Activated naive CD4-positive, alpha-beta T cell treated with anti-CD3 and anti-CD28 coated beads for 36 hours (primary cell): ENCODE measurements at regions of chr10 and their contacts with region 1.

Region 1: GRCh38 chr10:100046021-100046486 is 35.6 kb downstream of the CPN1 start:
- DNase-seq: peak; percentile 91
- H3K4me3 Mint-ChIP-seq: no peak overlapping the region
- H3K27ac Mint-ChIP-seq: no peak overlapping the region
- H3K4me1 Mint-ChIP-seq: peaks cover 7% of the 10 kb centered on the region
- H3K27me3 Mint-ChIP-seq: peaks cover 7% of the 10 kb centered on the region

Region 2: GRCh38 chr10:99395750-99396445 is 650.2 kb before region 1 on chr10:
- CTCF ChIA-PET with region 1: no interaction called
- intact Hi-C with region 1: loop called (anchors 5 kb)
- DNase-seq: no peak
- H3K4me3 Mint-ChIP-seq: no peak overlapping the region
- H3K27ac Mint-ChIP-seq: no peak overlapping the region
- H3K4me1 Mint-ChIP-seq: peaks cover 3% of the 10 kb centered on the region
- H3K27me3 Mint-ChIP-seq: no peaks in the 10 kb centered on the region

Region 3: DNA sequence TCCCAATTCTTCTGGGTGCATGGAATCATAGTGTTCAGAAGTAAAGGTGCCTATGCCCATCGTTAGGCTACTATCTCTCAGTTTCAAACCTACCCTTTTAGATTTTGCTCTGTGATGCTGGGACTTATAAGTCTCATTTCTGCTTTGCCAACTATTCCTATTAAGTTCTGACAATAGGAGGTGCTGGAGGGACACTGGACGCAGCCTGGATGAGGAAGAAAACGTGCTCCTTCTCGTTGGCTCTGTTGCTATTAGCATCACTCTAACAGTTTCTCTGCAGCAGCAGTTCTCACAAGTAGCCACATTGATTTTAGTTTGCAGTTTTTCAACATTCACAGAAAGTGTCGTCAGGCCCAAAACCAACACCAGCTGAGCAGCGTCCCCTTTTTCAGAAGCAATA is 191.2 kb before region 1 on chr10:
- CTCF ChIA-PET with region 1: interaction called, 172 read pairs
- intact Hi-C with region 1: no loop called
- DNase-seq: no peak
- H3K4me3 Mint-ChIP-seq: no peak overlapping the region
- H3K27ac Mint-ChIP-seq: no peak overlapping the region
- H3K4me1 Mint-ChIP-seq: no peaks in the 10 kb centered on the region
- H3K27me3 Mint-ChIP-seq: no peaks in the 10 kb centered on the region

Region 4: DNA sequence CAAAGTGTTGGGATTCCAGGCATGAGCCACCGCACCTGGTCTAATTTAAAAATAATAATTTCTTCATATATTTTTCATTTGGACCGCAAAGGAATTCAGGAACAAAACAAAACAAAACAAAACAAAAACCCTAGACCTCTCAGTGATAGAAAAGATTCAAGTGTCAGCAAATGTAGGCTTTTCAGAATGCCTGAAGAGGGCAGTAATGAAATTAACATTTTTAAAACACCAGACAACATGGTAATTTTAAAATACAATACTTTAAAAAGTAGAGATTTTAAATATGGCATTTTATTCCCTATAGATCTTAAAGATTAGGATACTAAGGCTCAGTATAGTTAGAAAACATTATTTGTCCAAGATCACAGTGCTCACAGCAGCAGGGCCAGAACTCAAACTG is 72.9 kb before region 1 on chr10:
- CTCF ChIA-PET with region 1: no interaction called
- intact Hi-C with region 1: loop called (anchors 1 kb)
- DNase-seq: no peak
- H3K4me3 Mint-ChIP-seq: no peak overlapping the region
- H3K27ac Mint-ChIP-seq: no peak overlapping the region
- H3K4me1 Mint-ChIP-seq: no peaks in the 10 kb centered on the region
- H3K27me3 Mint-ChIP-seq: no peaks in the 10 kb centered on the region

Region 5: GRCh38 chr10:100033766-100034418 is 12.2 kb before region 1 on chr10:
- CTCF ChIA-PET with region 1: interaction called, 10 read pairs
- intact Hi-C with region 1: no loop called
- DNase-seq: no peak
- H3K4me3 Mint-ChIP-seq: no peak overlapping the region
- H3K27ac Mint-ChIP-seq: no peak overlapping the region
- H3K4me1 Mint-ChIP-seq: no peaks in the 10 kb centered on the region
- H3K27me3 Mint-ChIP-seq: no peaks in the 10 kb centered on the region